ENCODE measurements at regions of chr11 and their contacts with region 1.

Region 1: GRCh38 chr11:125351033-125351867 is 144.8 kb downstream of the FEZ1 start:
- DNase-seq: no peak
- H3K4me3 ChIP-seq: no peak overlapping the region
- H3K27ac ChIP-seq: no peak overlapping the region
- H3K4me1 ChIP-seq: peaks cover 0 to 9% of the 10 kb centered on the region in 2 donors
- H3K27me3 ChIP-seq: no peaks in the 10 kb centered on the region
- CTCF ChIP-seq: no peak
- POLR2A ChIP-seq: no peak

Region 2: GRCh38 chr11:125404776-125405435 is 53.7 kb after region 1 on chr11:
- intact Hi-C with region 1: loop called (anchors 5 kb)
- DNase-seq: peak; percentile 67 to 70
- H3K4me3 ChIP-seq: no peak overlapping the region
- H3K27ac ChIP-seq: no peak overlapping the region
- H3K4me1 ChIP-seq: no peaks in the 10 kb centered on the region
- H3K27me3 ChIP-seq: no peaks in the 10 kb centered on the region
- CTCF ChIP-seq: peak; percentile 79 to 98 (median 90)
- POLR2A ChIP-seq: no peak

Measured in thyroid gland (tissue), 4 donors.